HepG2 (cell line): ENCODE measurements at regions of chr10 and their contacts with region 1.

Region 1: GRCh38 chr10:89062861-89063260 is 72.3 kb downstream of the FAS start:
- DNase-seq: no peak
- ATAC-seq: no peak
- H3K4me3 ChIP-seq: no peak overlapping the region
- H3K27ac ChIP-seq: no peak overlapping the region
- H3K4me1 ChIP-seq: no peaks in the 10 kb centered on the region
- H3K27me3 ChIP-seq: no peaks in the 10 kb centered on the region; a peak in 1 of 5 replicates
- CTCF ChIP-seq: no peak
- EP300 ChIP-seq: no peak
- POLR2A ChIP-seq: no peak
- RAD21 ChIP-seq: no peak

Region 2: GRCh38 chr10:89074120-89074519 is 11.3 kb after region 1 on chr10:
- CTCF ChIA-PET with region 1: no interaction called
- POLR2A ChIA-PET with region 1: no interaction called
- in situ Hi-C with region 1: no loop called
- intact Hi-C with region 1: no loop called
- DNase-seq: no peak
- ATAC-seq: no peak
- H3K4me3 ChIP-seq: no peak overlapping the region
- H3K27ac ChIP-seq: no peak overlapping the region
- H3K4me1 ChIP-seq: no peaks in the 10 kb centered on the region
- H3K27me3 ChIP-seq: peaks cover 0 to 1% of the 10 kb centered on the region in 2 experiments; a peak in 1 of 5 replicates
- CTCF ChIP-seq: no peak
- EP300 ChIP-seq: no peak
- POLR2A ChIP-seq: no peak
- RAD21 ChIP-seq: no peak

Region 3: DNA sequence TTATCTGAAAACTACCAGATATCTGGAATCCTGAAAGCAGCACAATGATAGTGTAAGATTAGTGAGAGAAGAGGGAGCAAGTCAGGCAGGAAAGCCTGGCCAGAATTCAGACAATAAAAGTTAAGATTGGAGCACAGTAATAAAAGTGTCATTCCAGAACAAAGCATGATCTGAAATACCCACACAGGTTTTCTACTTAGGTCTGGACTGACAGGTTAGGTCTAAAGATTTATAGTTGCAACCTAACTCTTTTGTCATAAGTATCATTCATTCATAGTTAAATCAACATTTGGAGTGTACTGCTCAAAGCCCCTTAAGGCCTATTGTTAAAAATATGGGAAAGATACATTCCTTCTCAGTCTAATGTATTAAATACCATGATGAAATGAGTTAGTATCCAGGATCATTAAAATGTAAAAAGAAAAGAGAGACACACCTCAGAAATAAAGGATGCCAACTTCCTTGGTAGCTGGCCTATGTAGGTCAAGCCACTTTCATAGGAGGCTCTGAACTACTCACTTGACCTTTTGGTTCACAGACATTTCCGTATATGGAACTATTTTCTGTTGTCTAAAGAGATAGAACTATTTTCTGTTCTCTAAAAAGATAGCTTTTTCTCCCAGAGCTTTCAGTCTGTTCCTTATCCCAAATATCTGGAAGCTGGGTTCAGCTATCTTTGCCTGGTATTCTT is 33.0 kb after region 1 on chr10:
- CTCF ChIA-PET with region 1: no interaction called
- POLR2A ChIA-PET with region 1: no interaction called
- in situ Hi-C with region 1: no loop called
- intact Hi-C with region 1: loop called (anchors 1 kb)
- DNase-seq: no peak
- ATAC-seq: no peak
- H3K4me3 ChIP-seq: no peak overlapping the region
- H3K27ac ChIP-seq: no peak overlapping the region
- H3K4me1 ChIP-seq: no peaks in the 10 kb centered on the region
- H3K27me3 ChIP-seq: no peaks in the 10 kb centered on the region; a peak in 1 of 5 replicates
- CTCF ChIP-seq: no peak
- EP300 ChIP-seq: no peak
- POLR2A ChIP-seq: no peak
- RAD21 ChIP-seq: no peak

Region 4: DNA sequence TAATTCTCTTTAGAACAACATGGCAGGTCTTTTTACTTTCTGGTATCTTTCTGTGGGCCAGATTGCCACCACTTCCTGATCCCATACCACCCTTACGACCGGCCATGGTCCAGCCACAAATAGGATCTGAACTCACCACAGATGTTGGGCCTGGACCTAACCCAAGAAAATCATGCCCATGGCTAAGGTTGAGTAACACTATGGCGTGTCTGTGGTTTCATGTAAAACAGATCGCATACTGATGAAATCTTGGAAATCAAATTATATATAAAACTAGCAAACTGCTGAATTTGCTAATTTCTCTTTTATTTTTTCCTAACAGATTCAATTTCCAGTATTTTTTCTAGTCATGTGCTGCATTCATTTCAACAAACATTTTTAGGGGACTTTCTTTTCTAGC is 67.0 kb after region 1 on chr10:
- CTCF ChIA-PET with region 1: no interaction called
- POLR2A ChIA-PET with region 1: no interaction called
- in situ Hi-C with region 1: no loop called
- intact Hi-C with region 1: no loop called
- DNase-seq: no peak
- ATAC-seq: no peak
- H3K4me3 ChIP-seq: no peak overlapping the region
- H3K27ac ChIP-seq: no peak overlapping the region
- H3K4me1 ChIP-seq: no peaks in the 10 kb centered on the region
- H3K27me3 ChIP-seq: no peaks in the 10 kb centered on the region
- CTCF ChIP-seq: no peak
- EP300 ChIP-seq: no peak
- POLR2A ChIP-seq: no peak
- RAD21 ChIP-seq: no peak

Region 5: GRCh38 chr10:89301232-89301631 is 238.4 kb after region 1 on chr10:
- CTCF ChIA-PET with region 1: no interaction called
- POLR2A ChIA-PET with region 1: no interaction called
- in situ Hi-C with region 1: no loop called
- intact Hi-C with region 1: no loop called
- DNase-seq: no peak
- ATAC-seq: peak; percentile 43
- H3K4me3 ChIP-seq: peak overlapping the region; percentile 28 to 71 (median 56); a peak in 5 of 6 replicates
- H3K27ac ChIP-seq: no peak overlapping the region
- H3K4me1 ChIP-seq: peaks cover 24% of the 10 kb centered on the region
- H3K27me3 ChIP-seq: no peaks in the 10 kb centered on the region; a peak in 1 of 5 replicates
- CTCF ChIP-seq: no peak
- EP300 ChIP-seq: no peak
- POLR2A ChIP-seq: no peak
- RAD21 ChIP-seq: no peak

Region 6: DNA sequence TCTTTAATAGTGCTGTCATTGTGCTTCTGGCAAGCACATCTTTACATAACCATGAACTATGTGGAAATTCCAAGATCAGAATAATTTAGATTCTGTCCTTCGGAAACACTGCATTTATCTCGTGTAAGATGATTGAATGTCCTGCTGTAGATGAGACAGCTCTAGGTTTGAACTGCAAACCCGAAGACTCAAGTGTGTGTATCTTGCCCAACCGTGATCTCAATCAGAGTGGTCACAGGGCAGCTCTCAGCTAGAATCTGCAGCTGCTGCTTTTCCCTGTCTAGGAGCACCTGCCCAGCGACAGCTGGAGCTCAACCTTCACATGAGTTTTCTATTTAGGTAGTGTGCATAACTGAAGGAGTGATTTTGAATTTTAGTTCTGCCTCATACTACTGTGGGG is 621.0 kb after region 1 on chr10:
- CTCF ChIA-PET with region 1: no interaction called
- POLR2A ChIA-PET with region 1: no interaction called
- in situ Hi-C with region 1: no loop called
- intact Hi-C with region 1: no loop called
- DNase-seq: no peak
- ATAC-seq: no peak
- H3K4me3 ChIP-seq: no peak overlapping the region
- H3K27ac ChIP-seq: no peak overlapping the region
- H3K4me1 ChIP-seq: no peaks in the 10 kb centered on the region
- H3K27me3 ChIP-seq: no peaks in the 10 kb centered on the region
- CTCF ChIP-seq: no peak
- EP300 ChIP-seq: no peak
- POLR2A ChIP-seq: no peak
- RAD21 ChIP-seq: no peak